ENCODE measurements at regions of chr12 and their contacts with region 1.

Region 1: DNA sequence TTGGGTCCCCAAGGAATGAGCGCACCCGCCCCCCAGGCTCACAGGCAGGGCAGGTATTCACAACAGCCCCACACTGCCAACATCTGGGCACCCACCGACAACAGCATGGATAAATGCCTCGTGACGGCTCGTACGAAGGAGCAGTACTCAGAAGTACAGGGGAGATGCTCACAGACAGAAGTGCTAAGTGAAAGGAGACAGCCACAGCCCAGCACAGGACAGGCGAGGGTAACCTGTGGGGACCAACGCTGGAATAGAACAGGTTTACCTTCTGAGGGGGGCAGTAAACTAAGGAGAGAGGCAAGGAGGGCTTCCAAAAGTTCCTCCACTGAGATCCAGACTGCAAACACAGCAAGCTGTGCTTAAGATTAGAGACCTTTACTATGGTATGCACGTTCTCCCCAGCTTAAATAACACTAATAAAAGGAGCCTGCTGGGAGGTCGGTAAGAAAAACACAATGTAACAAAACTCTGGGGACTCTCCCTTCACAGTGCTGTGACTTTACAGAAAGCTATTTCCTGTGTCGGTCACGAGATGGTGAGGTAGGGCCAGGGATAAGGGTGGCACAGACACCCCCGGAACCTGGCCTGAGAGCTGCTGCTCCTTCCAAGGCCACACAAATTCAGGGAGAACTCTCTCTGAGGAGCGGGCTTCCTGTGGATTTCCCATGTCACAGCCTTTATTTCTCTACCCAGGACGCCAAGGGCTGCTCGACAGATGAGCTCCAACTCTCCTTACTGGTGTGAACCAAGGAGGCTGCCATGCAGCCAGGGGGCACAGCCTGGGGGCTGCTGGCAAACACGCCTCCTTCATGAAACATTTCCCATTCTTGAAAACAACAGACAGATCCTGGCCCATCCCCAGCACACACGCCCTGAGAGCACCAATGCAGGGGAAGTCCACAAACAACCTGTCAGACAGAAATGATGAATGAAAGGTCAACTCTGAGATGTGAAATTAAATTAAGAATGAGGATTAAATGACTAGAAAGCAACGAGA is 26.3 kb downstream of the SLC15A4 start:
- DNase-seq: no peak
- H3K4me3 ChIP-seq: no peak overlapping the region
- H3K27ac ChIP-seq: no peak overlapping the region
- H3K4me1 ChIP-seq: no peaks in the 10 kb centered on the region
- H3K27me3 ChIP-seq: no peaks in the 10 kb centered on the region
- CTCF ChIP-seq: no peak
- POLR2A ChIP-seq: no peak

Region 2: GRCh38 chr12:127509066-127509778 is 1288.2 kb before region 1 on chr12:
- intact Hi-C with region 1: no loop called
- DNase-seq: no peak
- H3K4me3 ChIP-seq: no peak overlapping the region
- H3K27ac ChIP-seq: no peak overlapping the region
- H3K4me1 ChIP-seq: no peaks in the 10 kb centered on the region
- H3K27me3 ChIP-seq: no peaks in the 10 kb centered on the region
- CTCF ChIP-seq: no peak
- POLR2A ChIP-seq: no peak

Region 3: GRCh38 chr12:128259556-128260070 is 537.8 kb before region 1 on chr12:
- intact Hi-C with region 1: no loop called
- DNase-seq: no peak
- H3K4me3 ChIP-seq: no peak overlapping the region
- H3K27ac ChIP-seq: no peak overlapping the region
- H3K4me1 ChIP-seq: no peaks in the 10 kb centered on the region
- H3K27me3 ChIP-seq: no peaks in the 10 kb centered on the region
- CTCF ChIP-seq: peak in 3 of 4 experiments; percentile 49 to 62 (median 55)
- POLR2A ChIP-seq: no peak

Region 4: DNA sequence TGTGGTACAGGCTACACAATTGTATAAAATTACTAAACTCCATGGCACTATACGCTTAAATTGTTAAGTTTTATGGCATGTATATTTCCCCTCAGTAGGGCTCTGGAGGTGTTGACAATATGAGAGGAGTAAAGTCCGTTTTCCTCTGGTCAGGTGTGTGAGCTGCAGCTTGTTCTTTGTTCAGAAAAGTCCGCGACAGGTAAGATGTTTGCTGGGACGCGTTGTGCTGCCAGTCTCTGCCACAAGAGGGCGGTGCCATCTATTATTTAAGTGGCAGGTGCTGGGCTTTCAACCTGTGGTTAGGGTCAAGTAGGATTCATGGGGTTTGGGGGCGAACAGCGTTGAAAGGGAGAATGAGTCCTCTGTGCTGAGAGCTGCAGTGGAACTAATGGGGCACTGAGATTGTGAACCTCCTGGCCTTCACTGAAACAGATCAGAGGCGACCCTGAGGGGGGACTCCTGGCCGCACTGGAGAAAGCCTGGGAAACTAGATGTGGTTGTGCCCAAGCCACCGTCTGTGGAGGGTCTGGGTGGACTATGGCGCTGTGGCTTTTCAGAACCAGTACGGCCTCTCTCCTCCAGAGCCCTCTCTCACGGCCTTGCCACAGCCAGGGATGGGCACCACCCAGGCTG is 152.6 kb before region 1 on chr12:
- intact Hi-C with region 1: loop called (anchors 10 kb)
- DNase-seq: peak; percentile 7
- H3K4me3 ChIP-seq: no peak overlapping the region
- H3K27ac ChIP-seq: no peak overlapping the region
- H3K4me1 ChIP-seq: no peaks in the 10 kb centered on the region
- H3K27me3 ChIP-seq: no peaks in the 10 kb centered on the region
- CTCF ChIP-seq: peak; percentile 29 to 69 (median 41)
- POLR2A ChIP-seq: no peak

Region 5: GRCh38 chr12:128707488-128707887 is 89.9 kb before region 1 on chr12:
- intact Hi-C with region 1: no loop called
- DNase-seq: no peak
- H3K4me3 ChIP-seq: no peak overlapping the region
- H3K27ac ChIP-seq: no peak overlapping the region
- H3K4me1 ChIP-seq: no peaks in the 10 kb centered on the region
- H3K27me3 ChIP-seq: no peaks in the 10 kb centered on the region
- CTCF ChIP-seq: no peak
- POLR2A ChIP-seq: no peak